GM13976 (cell line): ENCODE measurements at regions of chr10 and their contacts with region 1.

Region 1: DNA sequence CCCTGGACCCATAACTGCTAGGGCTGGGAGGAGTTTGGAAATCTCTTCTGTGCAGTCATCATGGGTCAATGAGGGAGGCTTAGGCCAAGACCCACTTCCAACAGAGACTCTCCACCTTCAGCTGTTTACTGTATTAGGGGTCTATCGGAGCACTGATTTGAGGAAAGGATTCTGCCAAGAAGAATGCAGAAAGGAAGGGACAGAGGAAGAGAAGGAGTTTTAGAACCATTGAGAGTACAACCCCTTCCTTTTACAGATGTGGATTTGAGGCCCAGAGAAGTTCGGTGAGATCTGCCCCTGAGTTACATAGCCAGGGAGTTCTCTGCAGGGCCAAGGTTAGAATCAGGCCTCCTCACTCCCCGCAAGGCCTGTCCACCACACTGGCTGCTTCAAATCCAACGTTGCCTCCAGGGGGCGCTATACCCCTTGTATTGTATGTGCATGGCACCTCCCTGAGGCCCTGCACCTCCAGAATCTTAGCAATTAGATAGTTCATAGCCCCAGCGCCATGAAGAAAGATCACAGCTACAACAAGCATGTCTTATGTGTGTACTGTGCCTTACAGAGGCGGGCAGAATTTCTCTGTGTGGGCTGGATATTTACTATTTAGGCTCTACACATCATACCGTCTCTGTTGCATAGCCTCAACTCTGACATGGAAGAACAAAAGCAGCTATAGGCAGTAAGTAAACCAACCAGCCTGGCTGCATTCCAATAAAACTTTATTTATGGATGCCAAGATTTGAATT is 246.8 kb downstream of the SKIDA1 start:
- DNase-seq: peak; percentile 69
- CTCF ChIP-seq: peak; percentile 70

Region 2: DNA sequence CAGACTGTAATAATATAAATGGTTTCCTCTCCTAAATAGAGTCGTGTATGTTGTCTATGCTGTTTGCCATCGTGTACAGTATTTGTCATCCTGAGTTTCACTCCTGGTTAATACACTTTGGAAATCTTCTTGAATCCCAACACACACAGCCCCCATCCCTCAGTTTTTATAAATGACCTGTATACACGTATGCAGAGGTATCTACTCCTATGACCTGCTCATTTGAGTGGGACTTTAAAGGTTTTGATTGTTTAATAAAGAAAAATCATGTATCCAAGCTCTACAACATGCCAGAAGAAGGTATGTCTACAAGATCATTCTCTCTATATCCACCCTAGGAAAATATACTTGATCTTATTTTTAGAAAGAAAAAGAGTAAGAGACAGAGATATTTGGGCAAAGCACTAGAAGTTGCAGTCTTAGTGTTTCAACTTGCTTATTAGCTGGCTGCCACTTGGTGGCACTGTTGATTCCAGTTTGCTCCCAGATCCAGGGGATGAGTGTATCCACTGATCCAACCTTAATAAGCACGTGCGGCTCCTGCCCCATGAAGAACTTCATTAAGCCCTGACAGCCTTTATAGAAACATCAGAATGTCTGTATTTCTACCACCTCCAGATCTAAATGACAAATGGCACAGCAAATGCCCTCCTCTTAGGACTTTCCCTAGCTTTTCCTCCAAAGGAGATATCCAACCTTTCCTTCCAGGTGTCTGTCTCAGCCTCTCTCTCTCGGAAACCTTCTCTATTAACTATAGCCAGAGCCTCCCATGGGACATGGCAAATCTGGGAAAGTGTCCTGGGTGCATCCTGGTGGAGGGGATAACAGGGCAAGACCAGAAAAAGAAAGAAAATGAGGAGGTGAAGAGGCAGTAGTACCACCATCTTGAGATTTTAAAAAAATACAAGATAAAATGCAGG is 200.0 kb before region 1 on chr10:
- in situ Hi-C with region 1: loop called (anchors 10 kb)
- DNase-seq: peak; percentile 18
- CTCF ChIP-seq: peak; percentile 56

Region 3: DNA sequence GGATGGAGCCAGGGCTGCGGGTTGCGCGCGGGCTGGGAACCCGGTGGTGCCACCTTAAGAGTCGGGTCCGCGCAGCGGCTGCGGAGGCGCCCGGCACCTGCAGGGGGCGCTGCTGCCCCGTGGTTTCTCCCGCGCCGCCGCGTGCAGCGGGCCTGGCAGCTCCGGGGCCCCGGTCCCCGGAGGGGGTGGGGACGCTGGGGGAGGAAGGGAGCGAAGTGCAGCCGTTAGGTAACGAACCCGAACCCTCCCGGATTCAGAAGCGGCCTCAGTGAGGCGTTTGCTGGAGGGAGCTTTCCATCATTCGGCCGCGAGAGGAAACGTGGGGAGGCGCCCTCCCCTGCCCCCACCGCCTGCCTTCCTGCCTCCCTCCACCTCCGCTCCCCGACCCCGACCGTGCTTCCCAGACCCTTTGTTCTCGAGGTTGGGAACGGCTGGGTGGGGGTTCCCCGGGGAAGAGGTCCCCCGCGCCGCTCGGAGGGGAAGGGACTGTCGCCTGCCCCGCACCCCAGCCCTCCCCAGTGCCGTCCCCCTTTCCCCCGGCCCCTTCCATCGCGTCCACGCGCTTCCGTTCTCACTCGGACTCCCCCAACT is 217.2 kb after region 1 on chr10:
- in situ Hi-C with region 1: loop called (anchors 10 kb)
- DNase-seq: peak; percentile 95
- CTCF ChIP-seq: peak; percentile 93

Region 4: GRCh38 chr10:21732067-21732772 is 453.6 kb after region 1 on chr10:
- in situ Hi-C with region 1: loop called (anchors 25 kb)
- DNase-seq: peak; percentile 69
- CTCF ChIP-seq: peak; percentile 83

Region 5: DNA sequence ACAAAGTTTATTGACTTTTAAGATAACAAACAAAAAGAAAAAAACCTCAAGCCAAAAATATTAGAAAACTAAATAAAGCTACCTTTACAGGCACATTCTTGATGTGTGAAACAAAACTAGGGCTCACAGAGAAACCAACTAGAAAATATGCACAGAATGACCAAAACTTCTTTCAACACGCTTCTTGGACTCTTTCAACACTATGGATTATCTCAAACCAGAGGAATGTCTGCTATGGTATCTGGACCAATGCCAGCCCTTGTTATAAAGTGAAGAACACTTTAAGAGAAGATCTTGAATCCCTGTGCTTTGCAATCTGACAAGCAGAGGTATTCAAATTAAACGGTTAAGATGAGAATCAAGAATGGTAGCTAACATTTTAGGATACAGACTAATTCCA is 648.3 kb after region 1 on chr10:
- in situ Hi-C with region 1: loop called (anchors 25 kb)
- DNase-seq: no peak
- CTCF ChIP-seq: no peak